GM10248 (cell line): ENCODE measurements at regions of chr7 and their contacts with region 1.

Region 1: GRCh38 chr7:131293018-131293417 is 34.7 kb upstream of the MKLN1 start:
- DNase-seq: no peak
- CTCF ChIP-seq: no peak

Region 2: GRCh38 chr7:130856866-130857265 is 436.2 kb before region 1 on chr7:
- CTCF ChIA-PET with region 1: no interaction called
- POLR2A ChIA-PET with region 1: no interaction called
- DNase-seq: no peak
- CTCF ChIP-seq: no peak

Region 3: DNA sequence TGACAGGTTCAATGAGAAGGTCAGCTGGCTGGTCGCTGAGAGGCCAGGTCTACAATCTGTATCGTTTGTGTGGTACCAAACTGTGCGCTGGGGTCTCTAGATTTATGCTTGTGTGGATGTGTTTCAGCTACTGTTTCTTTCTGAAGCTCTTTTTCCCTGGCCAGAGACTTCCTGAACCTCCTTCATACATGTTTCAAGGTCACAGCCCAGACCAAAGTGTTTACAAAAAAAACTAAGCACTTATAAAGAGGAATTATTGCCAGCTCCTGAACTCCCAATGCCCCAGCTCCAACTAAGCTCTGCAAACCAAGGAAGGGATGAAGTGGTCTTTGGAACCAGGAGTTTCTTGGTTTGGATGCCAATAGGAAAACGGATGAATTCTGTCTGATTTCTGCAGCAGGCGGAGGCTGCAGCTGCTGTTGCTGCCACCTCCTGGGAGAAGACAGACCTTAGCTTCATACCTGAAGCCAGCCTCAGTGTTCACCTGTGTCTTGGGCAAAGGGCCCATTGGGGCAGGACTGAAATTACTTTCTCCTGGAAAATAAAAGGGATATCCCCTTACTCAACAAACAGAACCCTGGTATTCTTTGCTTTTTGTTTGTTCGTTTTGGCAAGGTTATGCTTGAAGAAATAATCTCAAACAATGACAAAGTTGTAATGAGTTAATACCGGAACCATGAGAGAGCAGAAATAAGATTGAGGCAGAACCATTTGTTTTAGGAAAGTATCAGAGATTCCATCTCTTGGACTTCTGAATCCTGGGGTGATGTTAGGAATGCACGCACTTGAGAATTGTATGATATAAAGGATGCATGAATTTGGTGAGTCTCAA is 10.1 kb after region 1 on chr7:
- CTCF ChIA-PET with region 1: interaction called, 16 read pairs
- POLR2A ChIA-PET with region 1: no interaction called
- DNase-seq: peak; percentile 30
- CTCF ChIP-seq: peak; percentile 50